Uterus (tissue), 4 donors: ENCODE measurements at regions of chr3 and their contacts with region 1.

Region 1: GRCh38 chr3:194312743-194313281 is 38.3 kb downstream of the CPN2 start:
- DNase-seq: peak; percentile 93 to 97
- H3K4me3 ChIP-seq: no peak overlapping the region
- H3K27ac ChIP-seq: peak overlapping the region in 1 of 2 donors; percentile 86
- H3K4me1 ChIP-seq: peaks cover 9 to 20% of the 10 kb centered on the region in 2 donors
- H3K27me3 ChIP-seq: no peaks in the 10 kb centered on the region
- CTCF ChIP-seq: no peak
- POLR2A ChIP-seq: peak in 1 of 2 donors; percentile 28

Region 2: GRCh38 chr3:193780810-193781472 is 531.9 kb before region 1 on chr3:
- intact Hi-C with region 1: loop called (anchors 2 kb)
- DNase-seq: peak; percentile 90 to 92
- H3K4me3 ChIP-seq: no peak overlapping the region
- H3K27ac ChIP-seq: peak overlapping the region in 1 of 2 donors; percentile 66
- H3K4me1 ChIP-seq: peaks cover 0 to 5% of the 10 kb centered on the region in 2 donors
- H3K27me3 ChIP-seq: no peaks in the 10 kb centered on the region
- CTCF ChIP-seq: peak; percentile 70 to 87 (median 85)
- POLR2A ChIP-seq: peak in 1 of 2 donors; percentile 10

Region 3: GRCh38 chr3:194121891-194122631 is 190.8 kb before region 1 on chr3:
- intact Hi-C with region 1: no loop called
- DNase-seq: no peak
- H3K4me3 ChIP-seq: no peak overlapping the region
- H3K27ac ChIP-seq: no peak overlapping the region
- H3K4me1 ChIP-seq: no peaks in the 10 kb centered on the region
- H3K27me3 ChIP-seq: no peaks in the 10 kb centered on the region
- CTCF ChIP-seq: no peak
- POLR2A ChIP-seq: no peak

Region 4: GRCh38 chr3:194134757-194135528 is 177.9 kb before region 1 on chr3:
- intact Hi-C with region 1: loop called (anchors 5 kb)
- DNase-seq: peak; percentile 93 to 96
- H3K4me3 ChIP-seq: peak overlapping the region; percentile 58 to 63
- H3K27ac ChIP-seq: peak overlapping the region; percentile 88 to 99
- H3K4me1 ChIP-seq: peaks cover 4 to 9% of the 10 kb centered on the region in 2 donors
- H3K27me3 ChIP-seq: no peaks in the 10 kb centered on the region
- CTCF ChIP-seq: peak in 1 of 4 experiments; percentile 11
- POLR2A ChIP-seq: peak in 1 of 2 donors; percentile 44

Region 5: GRCh38 chr3:194277104-194277785 is 35.6 kb before region 1 on chr3:
- intact Hi-C with region 1: loop called (anchors 5 kb)
- DNase-seq: peak; percentile 78 to 79
- H3K4me3 ChIP-seq: no peak overlapping the region
- H3K27ac ChIP-seq: peak overlapping the region; percentile 81 to 90
- H3K4me1 ChIP-seq: peaks cover 13 to 21% of the 10 kb centered on the region in 2 donors
- H3K27me3 ChIP-seq: no peaks in the 10 kb centered on the region
- CTCF ChIP-seq: no peak
- POLR2A ChIP-seq: no peak